ENCODE measurements at regions of chr7 and their contacts with region 1.

Region 1: DNA sequence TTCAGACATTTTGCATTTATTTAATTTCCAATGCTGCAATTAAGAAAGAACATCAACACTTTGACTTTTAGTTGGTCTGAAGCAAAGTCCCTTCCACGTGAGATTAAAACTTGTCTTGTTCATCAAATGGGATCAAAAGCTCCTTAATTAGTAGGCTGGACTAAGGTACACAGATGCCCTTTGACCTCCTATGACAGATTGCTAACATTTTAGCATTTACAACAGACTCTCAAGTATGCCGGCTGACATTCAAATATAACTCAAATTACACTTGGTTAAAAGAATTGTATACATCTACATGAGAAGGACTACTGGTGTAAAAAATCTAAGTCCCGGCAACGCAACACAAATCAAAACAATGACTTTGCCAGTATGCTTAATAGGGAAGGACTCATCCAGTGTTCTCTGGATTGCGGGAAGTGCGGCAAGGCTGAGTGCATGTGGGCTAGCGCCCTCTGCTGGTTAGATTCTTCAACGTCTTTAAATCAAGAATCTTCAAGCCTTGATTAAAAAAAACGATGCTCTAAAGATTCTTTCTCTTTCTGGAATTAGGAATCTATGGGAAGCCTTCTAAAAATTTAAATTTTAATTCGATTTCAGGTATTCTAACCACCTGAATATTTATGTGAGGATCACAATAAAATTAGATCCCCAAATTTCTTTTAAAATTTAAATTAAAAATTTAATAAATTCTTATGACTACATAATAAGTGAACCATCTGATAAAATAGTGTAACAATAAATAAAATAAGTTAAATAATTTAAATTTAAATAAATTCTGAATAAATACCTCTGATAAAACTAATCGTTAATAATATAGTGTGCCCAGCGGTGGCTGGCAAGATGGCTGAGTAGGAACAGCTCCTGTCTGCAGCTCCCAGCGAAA is 444.7 kb downstream of the DGKB start:
- DNase-seq: peak; percentile 65
- ATAC-seq: peak; percentile 68 to 79

Region 2: GRCh38 chr7:13279854-13280435 is 1177.9 kb before region 1 on chr7:
- intact Hi-C with region 1: loop called in 1 of 2 experiments (anchors 10 kb)
- DNase-seq: no peak
- ATAC-seq: no peak

Region 3: GRCh38 chr7:13524076-13524475 is 933.7 kb before region 1 on chr7:
- intact Hi-C with region 1: loop called in 1 of 2 experiments (anchors 10 kb)
- DNase-seq: no peak
- ATAC-seq: no peak

Region 4: GRCh38 chr7:13986208-13986607 is 471.6 kb before region 1 on chr7:
- intact Hi-C with region 1: loop called in 1 of 2 experiments (anchors 2 kb)
- DNase-seq: no peak
- ATAC-seq: no peak

Measured in left cardiac atrium (tissue), 4 donors.